ENCODE measurements at regions of chr1 and their contacts with region 1.

Region 1: DNA sequence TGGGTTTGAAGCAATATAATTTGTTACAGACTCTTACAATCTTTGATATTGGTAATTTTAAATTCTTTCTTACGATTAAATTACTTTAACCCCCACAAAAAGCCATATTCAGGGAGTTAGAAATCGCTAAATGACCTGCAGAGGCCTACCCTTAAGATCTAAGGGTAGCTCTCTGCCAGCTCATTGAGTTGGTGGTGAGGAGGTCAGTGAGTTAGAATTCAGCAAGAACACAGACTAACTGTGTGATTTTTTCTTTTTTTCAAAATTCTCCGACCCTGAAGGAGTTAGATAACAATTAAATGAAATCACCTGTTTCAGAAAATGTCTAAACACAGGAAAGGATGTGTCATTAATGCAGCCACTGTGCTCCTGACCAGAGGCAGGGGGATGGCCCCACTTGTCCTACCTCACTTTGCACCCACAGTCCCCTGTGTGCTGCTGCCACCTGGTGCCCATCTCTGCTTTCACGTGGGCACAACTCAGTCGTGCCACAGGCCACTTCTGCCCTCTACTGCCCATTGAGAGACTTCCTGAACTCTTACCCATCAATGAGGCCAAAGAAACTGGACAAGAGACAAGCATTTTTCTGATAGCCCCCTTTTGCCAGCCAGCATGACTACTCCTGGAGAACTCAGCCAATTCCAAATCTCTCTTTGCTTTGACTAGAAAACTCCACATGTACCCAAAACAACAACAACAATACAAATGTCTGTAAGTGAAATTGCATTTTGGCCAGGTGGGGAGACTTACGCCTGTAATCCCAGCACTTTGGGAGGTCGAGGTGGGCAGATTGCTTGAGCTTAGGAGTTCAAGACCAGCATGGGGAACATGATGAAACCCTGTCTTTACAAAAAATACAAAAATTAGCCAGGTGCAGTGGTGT is 8.4 kb downstream of the CFAP45 start:
- DNase-seq: peak; percentile 91
- ATAC-seq: peak; percentile 84
- H3K4me3 ChIP-seq: no peak overlapping the region
- H3K27ac ChIP-seq: no peak overlapping the region
- H3K4me1 ChIP-seq: peaks cover 13% of the 10 kb centered on the region
- H3K27me3 ChIP-seq: no peaks in the 10 kb centered on the region
- CTCF ChIP-seq: peak; percentile 100; the same call in 1 of the 2 replicates
- POLR2A ChIP-seq: peak; percentile 74
- RAD21 ChIP-seq: peak; percentile 100

Region 2: GRCh38 chr1:159161001-159161718 is 730.4 kb before region 1 on chr1:
- CTCF ChIA-PET with region 1: interaction called, 5 read pairs
- POLR2A ChIA-PET with region 1: no interaction called
- dilution Hi-C with region 1: no loop called
- in situ Hi-C with region 1: no loop called
- intact Hi-C with region 1: loop called (anchors 2 kb)
- DNase-seq: peak; percentile 86
- ATAC-seq: peak; percentile 100
- H3K4me3 ChIP-seq: no peak overlapping the region
- H3K27ac ChIP-seq: no peak overlapping the region
- H3K4me1 ChIP-seq: peaks cover 2% of the 10 kb centered on the region; the same call in 1 of the 2 replicates
- H3K27me3 ChIP-seq: no peaks in the 10 kb centered on the region
- CTCF ChIP-seq: peak; percentile 100
- POLR2A ChIP-seq: no peak
- RAD21 ChIP-seq: peak; percentile 95

Region 3: GRCh38 chr1:159532922-159533321 is 358.6 kb before region 1 on chr1:
- CTCF ChIA-PET with region 1: no interaction called
- POLR2A ChIA-PET with region 1: no interaction called
- dilution Hi-C with region 1: no loop called
- in situ Hi-C with region 1: no loop called
- intact Hi-C with region 1: no loop called
- DNase-seq: no peak
- ATAC-seq: no peak
- H3K4me3 ChIP-seq: no peak overlapping the region
- H3K27ac ChIP-seq: no peak overlapping the region
- H3K4me1 ChIP-seq: no peaks in the 10 kb centered on the region
- H3K27me3 ChIP-seq: no peaks in the 10 kb centered on the region
- CTCF ChIP-seq: no peak
- POLR2A ChIP-seq: no peak
- RAD21 ChIP-seq: no peak

Region 4: GRCh38 chr1:159780583-159781582 is 110.6 kb before region 1 on chr1 and contains the start of gene DUSP23:
- CTCF ChIA-PET with region 1: interaction called, 8 read pairs
- POLR2A ChIA-PET with region 1: no interaction called
- dilution Hi-C with region 1: loop called (anchors 25 kb)
- in situ Hi-C with region 1: no loop called
- intact Hi-C with region 1: loop called (anchors 1 kb)
- DNase-seq: peak; percentile 96
- ATAC-seq: peak; percentile 99
- H3K4me3 ChIP-seq: peak within 1 kb of the TSS; percentile 60
- H3K27ac ChIP-seq: no peak within 1 kb of the TSS
- H3K4me1 ChIP-seq: no peaks in the 10 kb centered on the region
- H3K27me3 ChIP-seq: no peaks in the 10 kb centered on the region
- CTCF ChIP-seq: peak; percentile 96
- POLR2A ChIP-seq: no peak
- RAD21 ChIP-seq: peak; percentile 80
- total RNA-seq, gene DUSP23: 4.1 and 4.2 TPM in 2 replicates

Region 5: GRCh38 chr1:159804924-159805323 is 86.6 kb before region 1 on chr1:
- CTCF ChIA-PET with region 1: interaction called, 150 read pairs
- POLR2A ChIA-PET with region 1: interaction called, 3 read pairs
- dilution Hi-C with region 1: no loop called
- in situ Hi-C with region 1: no loop called
- intact Hi-C with region 1: no loop called
- DNase-seq: peak; percentile 12
- ATAC-seq: no peak
- H3K4me3 ChIP-seq: no peak overlapping the region
- H3K27ac ChIP-seq: no peak overlapping the region
- H3K4me1 ChIP-seq: no peaks in the 10 kb centered on the region
- H3K27me3 ChIP-seq: peaks cover 28% of the 10 kb centered on the region
- CTCF ChIP-seq: no peak
- POLR2A ChIP-seq: no peak
- RAD21 ChIP-seq: no peak

Region 6: DNA sequence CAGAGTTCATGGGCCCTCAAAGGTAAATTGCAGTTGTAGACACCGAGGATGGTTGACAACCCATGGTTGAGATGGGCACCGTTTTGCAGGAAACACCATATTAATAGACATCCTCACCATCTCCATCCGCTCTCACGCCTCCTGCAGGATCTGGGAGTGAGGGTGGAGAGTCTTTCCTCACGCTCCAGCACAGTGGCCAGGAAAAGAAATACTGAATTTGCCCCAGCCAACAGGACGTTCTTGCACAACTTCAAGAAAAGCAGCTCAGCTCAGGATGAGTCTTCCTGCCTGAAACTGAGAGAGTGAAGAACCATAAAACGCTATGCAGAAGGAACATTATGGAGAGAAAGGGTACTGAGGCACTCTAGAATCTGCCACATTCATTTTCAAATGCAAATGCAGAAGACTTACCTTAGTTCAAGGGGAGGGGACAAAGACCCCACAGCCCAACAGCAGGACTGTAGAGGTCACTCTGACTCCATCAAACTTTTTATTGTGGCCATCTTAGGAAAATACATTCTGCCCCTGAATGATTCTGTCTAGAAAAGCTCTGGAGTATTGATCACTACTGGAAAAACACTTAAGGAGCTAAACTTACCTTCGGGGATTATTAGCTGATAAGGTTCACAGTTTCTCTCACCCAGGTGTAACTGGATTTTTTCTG is 55.5 kb before region 1 on chr1:
- CTCF ChIA-PET with region 1: interaction called, 10 read pairs
- POLR2A ChIA-PET with region 1: no interaction called
- dilution Hi-C with region 1: no loop called
- in situ Hi-C with region 1: no loop called
- intact Hi-C with region 1: loop called (anchors 1 kb)
- DNase-seq: no peak
- ATAC-seq: no peak
- H3K4me3 ChIP-seq: no peak overlapping the region
- H3K27ac ChIP-seq: no peak overlapping the region
- H3K4me1 ChIP-seq: no peaks in the 10 kb centered on the region
- H3K27me3 ChIP-seq: no peaks in the 10 kb centered on the region
- CTCF ChIP-seq: peak; percentile 23
- POLR2A ChIP-seq: no peak
- RAD21 ChIP-seq: peak; percentile 24; the same call in 1 of the 2 replicates

Region 7: DNA sequence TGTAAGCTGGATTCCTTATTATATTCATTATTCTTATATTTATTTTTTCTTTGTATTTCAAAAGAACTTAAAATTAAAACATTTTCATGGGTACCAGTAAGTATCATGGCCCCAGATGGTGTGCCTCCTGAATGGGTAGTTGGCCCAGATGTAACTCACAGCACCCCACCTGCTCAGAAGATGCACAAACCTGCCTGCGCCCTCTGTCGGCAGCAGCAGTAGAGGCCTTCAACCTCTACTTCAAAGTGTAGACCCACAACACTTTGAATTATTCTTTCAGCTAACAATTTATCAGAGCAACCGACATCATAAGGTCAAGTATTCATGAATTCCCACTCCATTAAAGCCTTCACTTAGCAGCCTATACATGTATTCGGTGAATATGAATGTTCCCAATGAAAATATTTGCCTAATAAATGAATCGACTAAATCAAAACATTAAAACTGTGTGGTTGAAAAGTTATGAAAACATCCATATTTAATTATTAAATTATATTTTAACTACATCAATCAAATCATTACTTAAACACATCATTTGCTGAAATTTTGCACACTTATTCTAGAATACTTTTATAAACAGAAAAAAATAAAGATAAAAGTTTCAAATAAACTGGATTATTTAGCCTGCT is 114.9 kb after region 1 on chr1:
- CTCF ChIA-PET with region 1: interaction called, 20 read pairs
- POLR2A ChIA-PET with region 1: no interaction called
- dilution Hi-C with region 1: no loop called
- in situ Hi-C with region 1: no loop called
- intact Hi-C with region 1: loop called (anchors 2 kb)
- DNase-seq: peak; percentile 62
- ATAC-seq: peak; percentile 76
- H3K4me3 ChIP-seq: no peak overlapping the region
- H3K27ac ChIP-seq: no peak overlapping the region
- H3K4me1 ChIP-seq: no peaks in the 10 kb centered on the region
- H3K27me3 ChIP-seq: peaks cover 31% of the 10 kb centered on the region
- CTCF ChIP-seq: peak; percentile 87
- POLR2A ChIP-seq: no peak
- RAD21 ChIP-seq: peak; percentile 74

Measured in IMR-90 (cell line).